Cardiac septum (tissue), 1 donor: ENCODE measurements at regions of chr6 and their contacts with region 1.

Region 1: GRCh38 chr6:34608321-34609091 is 52.4 kb upstream of the SPDEF start:
- DNase-seq: no peak

Region 2: GRCh38 chr6:34196126-34196830 is 412.2 kb before region 1 on chr6:
- intact Hi-C with region 1: loop called (anchors 2 kb)
- DNase-seq: peak; percentile 95

Region 3: GRCh38 chr6:34459899-34460593 is 148.5 kb before region 1 on chr6:
- intact Hi-C with region 1: loop called (anchors 2 kb)
- DNase-seq: no peak

Region 4: DNA sequence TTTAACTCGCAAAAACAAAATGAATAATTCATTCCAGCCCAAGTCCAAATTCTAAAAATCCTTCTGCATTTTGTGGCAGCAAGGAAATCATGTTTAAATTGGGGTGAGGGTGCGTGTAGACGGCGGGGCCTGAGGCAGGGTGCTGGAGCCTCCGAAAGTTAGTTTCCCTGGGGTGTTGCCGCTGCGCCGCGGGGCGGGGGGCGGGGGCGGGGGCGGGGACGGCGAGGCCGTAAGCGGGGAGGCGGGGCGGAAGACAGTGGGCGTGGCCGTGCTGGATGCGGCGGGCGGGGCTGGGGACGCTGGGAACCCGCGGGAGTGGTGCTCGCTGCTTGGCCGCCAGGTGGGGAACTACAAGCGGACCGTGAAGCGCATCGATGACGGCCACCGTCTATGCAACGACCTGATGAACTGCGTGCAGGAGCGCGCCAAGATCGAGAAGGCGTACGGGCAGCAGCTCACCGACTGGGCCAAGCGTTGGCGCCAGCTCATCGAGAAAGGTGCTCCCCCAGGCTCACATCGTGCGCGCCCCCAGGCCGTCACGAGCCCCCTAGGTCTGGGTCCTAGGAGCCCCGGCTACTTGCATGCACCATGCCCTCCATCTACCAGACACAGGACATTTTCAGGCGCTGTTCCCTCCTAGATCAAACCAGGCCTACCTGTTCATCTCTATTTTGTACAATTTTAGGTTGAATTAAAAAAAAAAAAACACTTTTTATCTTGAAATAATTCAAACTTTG is 81.3 kb before region 1 on chr6:
- intact Hi-C with region 1: loop called (anchors 1 kb)
- DNase-seq: peak; percentile 97